Psoas muscle (tissue), 8 donors: ENCODE measurements at regions of chr1 and their contacts with region 1.

Region 1: DNA sequence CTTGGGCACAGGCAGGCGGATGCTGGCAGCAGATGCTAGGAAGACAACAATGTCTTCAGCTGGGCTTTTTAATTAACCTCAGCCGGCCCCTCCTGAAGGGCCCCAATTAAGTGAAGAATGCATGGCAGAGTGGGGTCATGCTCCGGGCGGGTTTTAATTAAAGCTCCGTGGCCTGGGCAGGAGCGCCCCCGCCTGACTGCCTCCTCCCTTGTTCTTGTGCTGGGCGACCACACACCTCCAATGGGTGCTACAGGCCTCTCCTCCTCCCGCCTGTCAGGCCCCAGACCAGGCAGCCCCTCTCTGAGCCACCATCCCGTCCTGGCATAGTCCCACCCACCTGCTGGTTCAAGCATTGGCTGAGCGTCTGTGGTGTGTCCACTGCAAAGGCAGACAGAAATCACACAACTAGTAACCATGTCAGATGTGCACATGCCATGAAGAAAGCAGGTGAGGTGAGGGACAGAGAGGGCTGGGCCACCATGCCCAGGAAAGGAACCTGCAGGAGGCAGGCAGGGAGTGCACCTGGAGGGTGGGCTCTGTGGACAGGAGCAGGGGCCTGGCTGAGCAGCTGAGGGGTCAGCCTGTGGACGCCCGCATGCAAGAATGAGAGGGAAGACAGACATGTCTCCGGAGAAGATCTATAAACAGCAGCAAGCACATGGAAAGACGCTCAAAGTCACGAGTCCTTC is 8.5 kb upstream of the ARF1 start:
- DNase-seq: no peak
- ATAC-seq: peak; percentile 38 to 54 (median 52)
- H3K4me3 ChIP-seq: no peak overlapping the region
- H3K27ac ChIP-seq: no peak overlapping the region
- H3K4me1 ChIP-seq: no peaks in the 10 kb centered on the region
- H3K27me3 ChIP-seq: peaks cover 0 to 27% (median 11%) of the 10 kb centered on the region in 3 donors
- CTCF ChIP-seq: peak; percentile 27

Region 2: DNA sequence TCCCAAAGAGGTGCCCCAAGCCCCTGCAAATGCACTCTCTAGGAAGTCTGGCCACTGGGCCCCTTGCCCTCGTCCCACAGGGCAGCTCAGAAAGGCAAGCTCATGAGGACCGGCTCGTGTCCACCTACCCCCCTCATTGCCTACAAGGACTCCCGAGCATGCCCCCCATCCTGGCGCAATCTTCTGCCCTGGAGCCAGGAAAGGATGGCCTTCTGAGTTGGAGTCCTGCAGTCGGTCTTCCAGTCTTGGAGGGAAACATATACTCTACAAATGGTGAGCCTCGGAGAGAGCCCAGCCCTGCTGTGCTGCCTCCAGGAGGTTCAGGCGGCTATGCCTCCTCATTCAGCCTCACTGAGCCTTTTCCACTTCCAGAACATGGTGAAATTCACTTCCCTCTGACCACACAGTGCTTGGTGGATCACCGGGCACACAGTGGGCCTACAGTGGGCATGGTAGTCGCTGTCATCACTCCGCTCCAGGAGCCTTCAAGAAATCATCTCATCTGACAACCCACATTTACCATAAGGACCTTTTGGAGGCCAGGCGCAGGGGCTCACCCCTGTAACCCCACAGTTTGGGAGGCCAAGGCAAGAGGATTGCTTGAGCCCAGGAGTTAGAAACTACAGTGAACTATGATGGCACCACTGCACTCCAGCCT is 73.0 kb before region 1 on chr1:
- intact Hi-C with region 1: loop called in 1 of 2 experiments (anchors 1 kb)
- DNase-seq: peak in 1 of 2 donors; percentile 16
- ATAC-seq: no peak
- H3K4me3 ChIP-seq: no peak overlapping the region
- H3K27ac ChIP-seq: no peak overlapping the region
- H3K4me1 ChIP-seq: no peaks in the 10 kb centered on the region
- H3K27me3 ChIP-seq: peaks cover 0 to 28% (median 20%) of the 10 kb centered on the region in 3 donors
- CTCF ChIP-seq: no peak